ENCODE measurements at regions of chr6 and their contacts with region 1.

Region 1: GRCh38 chr6:139369568-139370282 is 4.7 kb downstream of the CITED2 start:
- DNase-seq: peak in 6 of 9 donors; percentile 16 to 49 (median 41)
- ATAC-seq: no peak
- H3K4me3 ChIP-seq: peak overlapping the region; percentile 3
- H3K4me3 Mint-ChIP-seq: peak overlapping the region; percentile 13 to 100 (median 96)
- H3K27ac ChIP-seq: peak overlapping the region; percentile 82
- H3K27ac Mint-ChIP-seq: peak overlapping the region; percentile 60 to 100 (median 98)
- H3K4me1 ChIP-seq: peaks cover 25 to 39% of the 10 kb centered on the region in 2 donors
- H3K4me1 Mint-ChIP-seq: peaks cover 25 to 53% (median 50%) of the 10 kb centered on the region in 7 donors
- H3K27me3 ChIP-seq: no peaks in the 10 kb centered on the region
- H3K27me3 Mint-ChIP-seq: peaks cover 0 to 2% (median 0%) of the 10 kb centered on the region in 5 donors

Region 2: DNA sequence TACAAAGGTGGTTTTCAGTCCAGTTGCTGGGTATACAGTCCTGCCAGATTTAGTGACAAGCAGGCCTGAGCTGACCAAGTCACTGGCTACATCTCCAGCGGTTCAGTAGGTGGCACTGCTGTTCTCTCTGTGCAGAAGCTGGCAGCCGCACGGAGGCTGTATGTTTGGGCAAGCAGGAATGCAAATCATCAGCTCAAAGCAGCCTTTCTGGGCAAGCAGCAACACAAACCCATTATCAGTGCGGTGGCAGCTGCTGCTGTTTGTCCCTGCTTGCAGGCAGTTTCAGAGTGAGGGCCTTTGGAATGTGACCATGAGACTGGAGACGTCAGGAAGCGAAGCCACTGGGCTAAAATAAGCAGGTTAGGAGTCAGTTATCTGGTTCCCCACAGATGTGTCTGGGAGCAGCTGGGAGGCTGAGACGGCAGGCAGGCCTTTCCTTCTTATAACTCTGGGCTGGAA is 150.4 kb before region 1 on chr6:
- CTCF ChIA-PET with region 1: interaction called, 151 read pairs
- POLR2A ChIA-PET with region 1: interaction called, 42 read pairs
- intact Hi-C with region 1: loop called (anchors 1 kb)
- DNase-seq: peak; percentile 39 to 76 (median 60)
- ATAC-seq: peak; percentile 100
- H3K4me3 ChIP-seq: no peak overlapping the region
- H3K4me3 Mint-ChIP-seq: peak overlapping the region in 8 of 10 donors; percentile 41 to 68 (median 58)
- H3K27ac ChIP-seq: no peak overlapping the region
- H3K27ac Mint-ChIP-seq: peak overlapping the region; percentile 49 to 92 (median 78)
- H3K4me1 ChIP-seq: peaks cover 5 to 10% of the 10 kb centered on the region in 2 donors
- H3K4me1 Mint-ChIP-seq: peaks cover 6 to 20% (median 12%) of the 10 kb centered on the region in 7 donors
- H3K27me3 ChIP-seq: no peaks in the 10 kb centered on the region
- H3K27me3 Mint-ChIP-seq: no peaks in the 10 kb centered on the region

Region 3: DNA sequence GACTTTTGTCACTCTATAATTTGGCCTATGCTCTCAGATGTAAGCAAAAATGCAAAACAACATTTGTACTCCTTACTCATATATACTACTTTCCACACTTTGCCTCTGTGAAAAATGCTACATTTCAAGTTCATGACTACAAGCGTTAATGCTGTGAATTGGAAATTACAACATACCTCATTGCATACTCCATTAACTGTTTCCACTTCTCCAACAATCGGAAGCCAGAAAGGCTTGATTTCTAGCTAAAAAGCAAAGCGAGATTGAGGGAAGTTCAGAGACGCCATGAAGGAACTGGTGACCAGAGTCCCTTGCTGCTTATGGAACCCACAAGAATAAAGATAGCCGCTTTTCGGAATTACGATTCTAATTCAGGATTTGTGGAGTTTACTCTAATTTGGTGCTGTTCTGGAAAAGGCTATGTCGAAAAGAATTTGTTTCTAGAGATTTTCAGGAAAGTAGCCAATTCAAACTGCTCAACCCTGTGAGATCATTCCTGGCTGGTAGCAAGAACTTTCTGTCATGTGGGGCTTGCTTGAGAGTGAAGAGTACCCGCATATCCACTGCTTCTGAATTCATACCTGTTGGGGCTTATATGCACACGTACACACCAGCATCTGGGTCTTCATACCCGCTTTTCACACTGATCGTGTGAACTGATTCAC is 102.8 kb after region 1 on chr6:
- CTCF ChIA-PET with region 1: no interaction called
- POLR2A ChIA-PET with region 1: no interaction called
- intact Hi-C with region 1: no loop called
- DNase-seq: no peak
- ATAC-seq: no peak
- H3K4me3 ChIP-seq: no peak overlapping the region
- H3K4me3 Mint-ChIP-seq: no peak overlapping the region
- H3K27ac ChIP-seq: no peak overlapping the region
- H3K27ac Mint-ChIP-seq: no peak overlapping the region
- H3K4me1 ChIP-seq: no peaks in the 10 kb centered on the region
- H3K4me1 Mint-ChIP-seq: peaks cover 0 to 6% (median 0%) of the 10 kb centered on the region in 7 donors
- H3K27me3 ChIP-seq: no peaks in the 10 kb centered on the region
- H3K27me3 Mint-ChIP-seq: peaks cover 0 to 4% (median 0%) of the 10 kb centered on the region in 5 donors

Region 4: GRCh38 chr6:139895205-139895793 is 525.6 kb after region 1 on chr6:
- CTCF ChIA-PET with region 1: interaction called, 5 read pairs
- POLR2A ChIA-PET with region 1: no interaction called
- intact Hi-C with region 1: loop called (anchors 1 to 5 kb)
- DNase-seq: no peak
- ATAC-seq: no peak
- H3K4me3 ChIP-seq: no peak overlapping the region
- H3K4me3 Mint-ChIP-seq: no peak overlapping the region
- H3K27ac ChIP-seq: no peak overlapping the region
- H3K27ac Mint-ChIP-seq: peak overlapping the region in 1 of 9 donors; percentile 21
- H3K4me1 ChIP-seq: no peaks in the 10 kb centered on the region
- H3K4me1 Mint-ChIP-seq: no peaks in the 10 kb centered on the region
- H3K27me3 ChIP-seq: no peaks in the 10 kb centered on the region
- H3K27me3 Mint-ChIP-seq: peaks cover 0 to 9% (median 0%) of the 10 kb centered on the region in 5 donors

Region 5: GRCh38 chr6:139927236-139927635 is 557.5 kb after region 1 on chr6:
- CTCF ChIA-PET with region 1: interaction called, 4 read pairs
- POLR2A ChIA-PET with region 1: no interaction called
- intact Hi-C with region 1: loop called in 1 of 2 experiments (anchors 1 kb)
- DNase-seq: no peak
- ATAC-seq: no peak
- H3K4me3 ChIP-seq: no peak overlapping the region
- H3K4me3 Mint-ChIP-seq: no peak overlapping the region
- H3K27ac ChIP-seq: no peak overlapping the region
- H3K27ac Mint-ChIP-seq: no peak overlapping the region
- H3K4me1 ChIP-seq: no peaks in the 10 kb centered on the region
- H3K4me1 Mint-ChIP-seq: no peaks in the 10 kb centered on the region
- H3K27me3 ChIP-seq: no peaks in the 10 kb centered on the region
- H3K27me3 Mint-ChIP-seq: peaks cover 0 to 21% (median 14%) of the 10 kb centered on the region in 5 donors

Region 6: DNA sequence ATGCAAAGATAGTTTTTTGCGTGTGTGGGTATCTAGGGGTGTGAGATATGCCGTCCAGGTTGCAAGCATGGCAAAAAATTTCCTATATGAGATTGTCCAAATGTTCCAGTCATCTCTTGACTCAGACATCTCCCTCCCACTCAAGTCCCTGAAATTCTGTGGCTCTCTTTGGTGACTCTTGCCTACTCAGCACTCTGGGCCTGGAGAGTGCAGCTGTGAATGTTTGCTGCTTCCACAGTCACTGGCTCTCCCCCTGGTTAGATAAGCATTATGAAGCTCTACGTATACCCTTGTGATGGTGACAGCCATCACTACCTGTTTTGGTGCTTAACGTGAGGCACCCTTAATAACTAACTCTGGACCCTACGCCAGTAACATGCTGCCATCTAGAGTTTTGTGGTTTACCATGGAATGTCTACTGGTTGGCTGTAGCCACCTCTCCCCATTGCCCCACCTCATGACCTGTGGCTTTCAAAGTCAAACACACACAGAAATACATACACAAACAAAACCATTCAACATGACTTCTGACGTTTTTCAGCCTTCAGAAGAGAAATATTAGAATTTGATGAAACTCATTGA is 626.6 kb after region 1 on chr6:
- CTCF ChIA-PET with region 1: no interaction called
- POLR2A ChIA-PET with region 1: no interaction called
- intact Hi-C with region 1: loop called in 1 of 2 experiments (anchors 2 kb)
- DNase-seq: no peak
- ATAC-seq: no peak
- H3K4me3 ChIP-seq: no peak overlapping the region
- H3K4me3 Mint-ChIP-seq: no peak overlapping the region
- H3K27ac ChIP-seq: no peak overlapping the region
- H3K27ac Mint-ChIP-seq: no peak overlapping the region
- H3K4me1 ChIP-seq: no peaks in the 10 kb centered on the region
- H3K4me1 Mint-ChIP-seq: peaks cover 0 to 2% (median 0%) of the 10 kb centered on the region in 7 donors
- H3K27me3 ChIP-seq: no peaks in the 10 kb centered on the region
- H3K27me3 Mint-ChIP-seq: peaks cover 0 to under 1% (median 0%) of the 10 kb centered on the region in 5 donors

Measured in naive thymus-derived CD4-positive, alpha-beta T cell (primary cell).